ENCODE measurements at regions of chr14 and their contacts with region 1.

Region 1: GRCh38 chr14:32076278-32077080 is 625 bp upstream of the ARHGAP5 start:
- DNase-seq: peak; percentile 76 to 84 (median 80)
- H3K4me3 ChIP-seq: peak overlapping the region; percentile 71 to 73
- H3K4me3 Mint-ChIP-seq: peak overlapping the region; percentile 92 to 100 (median 96)
- H3K27ac ChIP-seq: peak overlapping the region; percentile 74
- H3K27ac Mint-ChIP-seq: peak overlapping the region; percentile 92 to 98 (median 96)
- H3K4me1 ChIP-seq: peaks cover 38% of the 10 kb centered on the region
- H3K4me1 Mint-ChIP-seq: peaks cover 22 to 48% (median 35%) of the 10 kb centered on the region in 4 donors
- H3K27me3 ChIP-seq: no peaks in the 10 kb centered on the region
- H3K27me3 Mint-ChIP-seq: peaks cover 0 to 2% of the 10 kb centered on the region in 2 donors

Region 2: GRCh38 chr14:31026395-31027118 is 1049.9 kb before region 1 on chr14:
- CTCF ChIA-PET with region 1: no interaction called
- POLR2A ChIA-PET with region 1: no interaction called
- intact Hi-C with region 1: loop called (anchors 5 kb)
- DNase-seq: peak; percentile 85 to 91 (median 87)
- H3K4me3 ChIP-seq: peak overlapping the region; percentile 66 to 87
- H3K4me3 Mint-ChIP-seq: peak overlapping the region; percentile 93 to 100 (median 98)
- H3K27ac ChIP-seq: peak overlapping the region; percentile 95
- H3K27ac Mint-ChIP-seq: peak overlapping the region; percentile 96 to 99 (median 99)
- H3K4me1 ChIP-seq: peaks cover 36% of the 10 kb centered on the region
- H3K4me1 Mint-ChIP-seq: peaks cover 39 to 64% (median 48%) of the 10 kb centered on the region in 4 donors
- H3K27me3 ChIP-seq: no peaks in the 10 kb centered on the region
- H3K27me3 Mint-ChIP-seq: no peaks in the 10 kb centered on the region

Region 3: GRCh38 chr14:31456841-31457664 is 619.4 kb before region 1 on chr14 and contains the start of gene DTD2:
- CTCF ChIA-PET with region 1: no interaction called
- POLR2A ChIA-PET with region 1: no interaction called
- intact Hi-C with region 1: loop called (anchors 1 kb)
- DNase-seq: peak; percentile 87 to 88 (median 88)
- H3K4me3 ChIP-seq: peak within 1 kb of the TSS; percentile 53 to 69
- H3K4me3 Mint-ChIP-seq: peak within 1 kb of the TSS; percentile 96 to 99 (median 97)
- H3K27ac ChIP-seq: peak within 1 kb of the TSS; percentile 89
- H3K27ac Mint-ChIP-seq: peak within 1 kb of the TSS; percentile 86 to 98 (median 97)
- H3K4me1 ChIP-seq: peaks cover 13% of the 10 kb centered on the region
- H3K4me1 Mint-ChIP-seq: peaks cover 13 to 34% (median 26%) of the 10 kb centered on the region in 4 donors
- H3K27me3 ChIP-seq: no peaks in the 10 kb centered on the region
- H3K27me3 Mint-ChIP-seq: peaks cover 0 to 3% of the 10 kb centered on the region in 2 donors
- total RNA-seq, gene DTD2: 15.1 to 20.2 TPM

Region 4: GRCh38 chr14:31660191-31660590 is 416.3 kb before region 1 on chr14:
- CTCF ChIA-PET with region 1: no interaction called
- POLR2A ChIA-PET with region 1: no interaction called
- intact Hi-C with region 1: no loop called
- DNase-seq: no peak
- H3K4me3 ChIP-seq: no peak overlapping the region
- H3K4me3 Mint-ChIP-seq: no peak overlapping the region
- H3K27ac ChIP-seq: no peak overlapping the region
- H3K27ac Mint-ChIP-seq: no peak overlapping the region
- H3K4me1 ChIP-seq: no peaks in the 10 kb centered on the region
- H3K4me1 Mint-ChIP-seq: peaks cover 8 to 14% (median 11%) of the 10 kb centered on the region in 4 donors
- H3K27me3 ChIP-seq: no peaks in the 10 kb centered on the region
- H3K27me3 Mint-ChIP-seq: no peaks in the 10 kb centered on the region

Region 5: GRCh38 chr14:31926123-31926522 is 150.4 kb before region 1 on chr14:
- CTCF ChIA-PET with region 1: interaction called, 16 read pairs
- POLR2A ChIA-PET with region 1: interaction called, 3 read pairs
- intact Hi-C with region 1: loop called (anchors 1 kb)
- DNase-seq: peak in 4 of 5 donors; percentile 47 to 54 (median 52)
- H3K4me3 ChIP-seq: no peak overlapping the region
- H3K4me3 Mint-ChIP-seq: no peak overlapping the region
- H3K27ac ChIP-seq: no peak overlapping the region
- H3K27ac Mint-ChIP-seq: peak overlapping the region in 1 of 7 donors; percentile 63
- H3K4me1 ChIP-seq: peaks cover 11% of the 10 kb centered on the region
- H3K4me1 Mint-ChIP-seq: peaks cover 7 to 14% (median 12%) of the 10 kb centered on the region in 4 donors
- H3K27me3 ChIP-seq: no peaks in the 10 kb centered on the region
- H3K27me3 Mint-ChIP-seq: no peaks in the 10 kb centered on the region

Region 6: DNA sequence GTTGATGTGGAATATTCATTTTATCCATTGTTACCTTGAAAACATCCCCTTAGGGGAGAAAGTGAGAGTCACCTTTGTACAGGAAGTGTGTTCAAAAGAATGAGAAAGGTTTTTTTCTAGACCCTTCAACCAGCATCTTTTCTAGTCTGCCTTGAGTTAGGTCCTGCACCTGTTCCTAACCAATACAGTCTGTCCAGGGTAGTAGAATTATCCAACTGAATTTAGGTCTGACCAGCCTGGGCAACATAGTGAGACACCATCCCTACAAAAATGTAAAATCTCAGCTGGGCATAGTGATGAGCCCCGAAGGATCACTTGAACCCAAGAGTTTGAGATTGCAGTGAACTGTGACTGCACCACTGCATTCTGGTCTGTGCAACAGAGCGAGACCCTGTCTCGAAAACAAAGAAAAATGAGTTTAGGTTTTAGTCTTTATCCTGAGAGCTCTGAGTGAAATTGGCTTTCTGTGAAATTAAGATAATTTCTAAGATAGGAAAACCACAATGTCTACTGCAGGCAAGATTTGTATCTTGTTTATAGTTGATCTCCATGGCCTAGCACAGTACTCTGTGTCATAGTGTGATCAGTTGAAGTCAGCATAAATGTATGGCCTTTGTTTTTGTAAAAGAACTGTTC is 25.8 kb after region 1 on chr14:
- CTCF ChIA-PET with region 1: interaction called, 4 read pairs
- POLR2A ChIA-PET with region 1: interaction called, 11 read pairs
- intact Hi-C with region 1: loop called (anchors 1 kb)
- DNase-seq: peak in 4 of 5 donors; percentile 42 to 57 (median 51)
- H3K4me3 ChIP-seq: no peak overlapping the region
- H3K4me3 Mint-ChIP-seq: peak overlapping the region; percentile 51 to 79 (median 67)
- H3K27ac ChIP-seq: no peak overlapping the region
- H3K27ac Mint-ChIP-seq: peak overlapping the region; percentile 81 to 93 (median 89)
- H3K4me1 ChIP-seq: peaks cover 53% of the 10 kb centered on the region
- H3K4me1 Mint-ChIP-seq: peaks cover 46 to 66% (median 57%) of the 10 kb centered on the region in 4 donors
- H3K27me3 ChIP-seq: no peaks in the 10 kb centered on the region
- H3K27me3 Mint-ChIP-seq: no peaks in the 10 kb centered on the region

Region 7: DNA sequence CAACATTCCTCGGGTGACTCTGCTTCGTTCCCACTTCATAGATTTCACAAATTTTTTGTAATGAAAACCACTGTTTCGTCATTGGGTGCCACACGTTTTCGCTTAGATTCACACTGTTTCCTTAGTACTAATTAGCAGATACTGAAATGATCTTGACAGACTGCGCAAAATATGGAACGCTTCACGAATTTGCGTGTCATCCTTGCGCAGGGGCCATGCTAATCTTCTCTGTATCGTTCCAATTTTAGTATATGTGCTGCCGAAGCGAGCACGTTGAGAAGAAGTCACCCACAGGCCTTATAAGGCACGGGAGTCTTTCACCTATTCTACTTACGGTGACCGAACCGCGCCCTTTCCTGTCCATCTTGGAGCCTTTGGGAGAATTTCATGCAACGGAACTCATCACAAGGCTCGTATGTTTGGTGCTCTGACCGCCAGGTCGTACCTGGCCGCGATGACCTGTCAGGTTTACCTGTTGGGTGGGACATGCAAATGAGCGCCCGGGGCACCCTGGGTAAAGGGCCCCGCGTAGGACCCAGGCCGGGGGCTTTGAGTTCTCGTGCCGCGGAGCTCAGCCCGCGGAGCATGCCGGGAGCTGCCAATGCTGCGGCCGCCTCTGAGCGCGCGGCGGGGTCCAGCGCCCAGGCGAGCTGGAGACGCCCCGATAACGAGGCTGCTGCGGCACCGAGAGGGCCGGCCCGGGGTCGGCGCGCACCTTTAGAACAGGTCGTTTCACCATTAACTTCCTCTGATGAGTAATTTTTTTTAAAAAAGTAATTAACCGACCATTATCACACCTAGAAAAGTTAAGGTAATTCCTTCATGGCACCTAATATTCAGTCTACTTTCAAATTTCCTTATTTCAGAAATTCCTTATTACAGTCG is 126.8 kb after region 1 on chr14 and contains the start of gene RNU6-8:
- CTCF ChIA-PET with region 1: interaction called, 9 read pairs
- POLR2A ChIA-PET with region 1: interaction called, 56 read pairs
- intact Hi-C with region 1: loop called (anchors 1 kb)
- DNase-seq: peak; percentile 89 to 95 (median 94)
- H3K4me3 ChIP-seq: peak within 1 kb of the TSS; percentile 50 to 68
- H3K4me3 Mint-ChIP-seq: peak within 1 kb of the TSS; percentile 90 to 96 (median 93)
- H3K27ac ChIP-seq: peak within 1 kb of the TSS; percentile 94
- H3K27ac Mint-ChIP-seq: peak within 1 kb of the TSS; percentile 96 to 100 (median 99)
- H3K4me1 ChIP-seq: peaks cover 23% of the 10 kb centered on the region
- H3K4me1 Mint-ChIP-seq: peaks cover 22 to 41% (median 28%) of the 10 kb centered on the region in 4 donors
- H3K27me3 ChIP-seq: no peaks in the 10 kb centered on the region
- H3K27me3 Mint-ChIP-seq: peaks cover 0 to 2% of the 10 kb centered on the region in 2 donors
- total RNA-seq, gene RNU6-8: not detected

Region 8: DNA sequence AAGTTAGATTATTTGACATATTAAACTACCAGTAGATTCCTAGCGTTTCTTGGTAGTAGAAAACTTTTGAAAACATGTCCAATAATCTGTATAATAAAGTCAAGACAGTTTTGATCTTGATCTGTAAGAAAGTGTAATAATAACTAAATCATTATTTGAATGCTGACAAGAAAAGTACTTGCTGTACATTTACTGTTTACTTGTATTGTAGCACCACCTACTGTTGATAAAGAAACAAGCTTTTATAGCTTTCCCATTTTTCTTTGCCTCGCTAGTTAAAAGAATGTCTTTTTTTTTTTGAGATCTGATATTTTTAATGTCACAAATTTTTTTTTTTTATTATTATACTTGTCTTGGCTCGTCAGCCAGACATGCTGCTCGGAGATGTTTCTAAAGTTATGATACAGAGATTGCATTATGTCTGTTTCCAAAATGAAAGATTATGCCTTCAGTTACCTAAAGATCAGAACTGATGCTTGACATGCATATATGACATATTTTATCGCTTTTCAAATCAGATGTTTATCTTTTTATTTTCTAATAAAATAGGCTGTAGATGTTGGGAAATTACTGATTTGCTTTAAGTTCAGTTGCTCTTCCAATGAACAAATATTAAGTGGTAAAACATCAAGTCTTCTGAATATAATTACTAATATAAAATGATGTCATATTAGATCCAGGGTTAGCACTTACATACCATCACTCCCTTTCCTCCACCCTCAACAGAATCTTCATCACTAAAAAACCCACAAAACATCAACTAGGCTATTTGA is 393.1 kb after region 1 on chr14:
- CTCF ChIA-PET with region 1: no interaction called
- POLR2A ChIA-PET with region 1: no interaction called
- intact Hi-C with region 1: loop called (anchors 10 kb)
- DNase-seq: peak in 2 of 5 donors; percentile 2 to 5
- H3K4me3 ChIP-seq: no peak overlapping the region
- H3K4me3 Mint-ChIP-seq: no peak overlapping the region
- H3K27ac ChIP-seq: no peak overlapping the region
- H3K27ac Mint-ChIP-seq: no peak overlapping the region
- H3K4me1 ChIP-seq: no peaks in the 10 kb centered on the region
- H3K4me1 Mint-ChIP-seq: no peaks in the 10 kb centered on the region
- H3K27me3 ChIP-seq: no peaks in the 10 kb centered on the region
- H3K27me3 Mint-ChIP-seq: peaks cover 2 to 5% of the 10 kb centered on the region in 2 donors